ENCODE measurements at regions of chr4 and their contacts with region 1.

Region 1: GRCh38 chr4:118879409-118879808 is 9.2 kb upstream of the SYNPO2 start:
- DNase-seq: no peak
- ATAC-seq: no peak
- H3K4me3 ChIP-seq: no peak overlapping the region
- H3K27ac ChIP-seq: no peak overlapping the region
- H3K4me1 ChIP-seq: no peaks in the 10 kb centered on the region
- H3K27me3 ChIP-seq: no peaks in the 10 kb centered on the region
- CTCF ChIP-seq: no peak
- POLR2A ChIP-seq: no peak

Region 2: GRCh38 chr4:118842055-118842454 is 37.4 kb before region 1 on chr4:
- intact Hi-C with region 1: loop called in 3 of 10 experiments (anchors 5 to 10 kb)
- DNase-seq: no peak
- ATAC-seq: no peak
- H3K4me3 ChIP-seq: no peak overlapping the region
- H3K27ac ChIP-seq: no peak overlapping the region
- H3K4me1 ChIP-seq: no peaks in the 10 kb centered on the region
- H3K27me3 ChIP-seq: no peaks in the 10 kb centered on the region
- CTCF ChIP-seq: no peak
- POLR2A ChIP-seq: no peak

Measured in heart left ventricle (tissue), 16 donors.